ENCODE measurements at regions of chr17 and their contacts with region 1.

Region 1: GRCh38 chr17:42517516-42517915 is 18.5 kb upstream of the NAGLU start:
- DNase-seq: peak; percentile 87
- H3K4me3 ChIP-seq: no peak overlapping the region
- H3K27ac ChIP-seq: peak overlapping the region; percentile 100
- H3K27me3 ChIP-seq: no peaks in the 10 kb centered on the region
- CTCF ChIP-seq: peak; percentile 95

Region 2: DNA sequence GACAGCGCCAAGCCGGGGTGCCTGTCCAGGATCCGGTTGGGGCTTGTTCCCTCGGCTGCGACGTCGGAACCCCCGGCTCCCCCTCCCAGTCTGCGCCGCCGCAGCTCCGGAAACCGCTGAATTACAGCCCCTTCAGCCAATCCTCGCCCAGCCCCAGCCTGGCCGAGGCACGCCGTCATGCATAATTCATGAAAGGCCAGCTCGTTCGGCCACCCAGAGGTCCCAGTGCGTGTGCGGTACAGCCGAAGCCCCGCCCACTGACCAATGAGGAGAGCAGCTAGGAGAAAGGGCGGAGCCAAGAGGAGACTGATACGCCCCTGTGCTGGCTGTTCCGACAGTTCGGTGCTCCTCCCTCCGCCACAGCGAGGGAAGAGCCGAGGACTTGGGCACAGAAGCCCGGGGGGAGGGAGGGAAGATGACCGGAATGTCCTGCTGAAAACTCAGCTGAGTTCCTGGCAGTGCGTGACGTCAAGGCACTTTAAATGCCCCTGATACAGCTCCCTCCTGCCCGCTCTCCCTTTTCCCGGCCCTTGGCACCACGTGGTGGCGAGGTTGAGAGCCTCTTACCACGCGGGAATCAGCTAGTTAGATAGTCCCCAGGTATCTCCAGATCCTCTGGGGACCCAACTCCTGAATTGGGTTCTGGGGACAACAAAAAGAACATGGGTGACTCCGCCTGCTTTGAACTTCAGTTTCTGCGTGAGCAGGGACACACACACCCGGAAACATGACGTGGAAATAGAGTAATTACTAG is 129.0 kb before region 1 on chr17 and contains the start of gene STAT3:
- CTCF ChIA-PET with region 1: interaction called, 6 read pairs
- POLR2A ChIA-PET with region 1: interaction called, 10 read pairs
- DNase-seq: peak; percentile 99
- H3K4me3 ChIP-seq: peak within 1 kb of the TSS; percentile 91
- H3K27ac ChIP-seq: peak within 1 kb of the TSS; percentile 98
- H3K27me3 ChIP-seq: no peaks in the 10 kb centered on the region
- CTCF ChIP-seq: no peak
- polyA plus RNA-seq, gene STAT3: 77.1 and 83.4 TPM in 2 replicates

Region 3: DNA sequence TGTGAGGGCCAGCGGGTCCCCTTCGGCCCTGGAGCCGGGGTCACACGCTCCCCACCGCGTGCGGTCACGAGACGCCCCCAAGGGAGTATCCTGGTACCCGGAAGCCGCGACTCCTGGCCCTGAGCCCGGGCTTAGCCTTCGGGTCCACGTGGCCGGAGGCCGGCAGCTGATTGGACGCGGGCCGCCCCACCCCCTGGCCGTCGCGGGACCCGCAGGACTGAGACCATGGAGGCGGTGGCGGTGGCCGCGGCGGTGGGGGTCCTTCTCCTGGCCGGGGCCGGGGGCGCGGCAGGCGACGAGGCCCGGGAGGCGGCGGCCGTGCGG is 18.5 kb after region 1 on chr17 and contains the start of gene NAGLU:
- CTCF ChIA-PET with region 1: interaction called, 6 read pairs
- POLR2A ChIA-PET with region 1: interaction called, 17 read pairs
- DNase-seq: no peak
- H3K4me3 ChIP-seq: peak within 1 kb of the TSS; percentile 69
- H3K27ac ChIP-seq: peak within 1 kb of the TSS; percentile 70
- H3K27me3 ChIP-seq: no peaks in the 10 kb centered on the region
- CTCF ChIP-seq: no peak
- polyA plus RNA-seq, gene NAGLU: 11.9 and 17.2 TPM in 2 replicates